ENCODE measurements at regions of chr17 and their contacts with region 1.

Region 1: DNA sequence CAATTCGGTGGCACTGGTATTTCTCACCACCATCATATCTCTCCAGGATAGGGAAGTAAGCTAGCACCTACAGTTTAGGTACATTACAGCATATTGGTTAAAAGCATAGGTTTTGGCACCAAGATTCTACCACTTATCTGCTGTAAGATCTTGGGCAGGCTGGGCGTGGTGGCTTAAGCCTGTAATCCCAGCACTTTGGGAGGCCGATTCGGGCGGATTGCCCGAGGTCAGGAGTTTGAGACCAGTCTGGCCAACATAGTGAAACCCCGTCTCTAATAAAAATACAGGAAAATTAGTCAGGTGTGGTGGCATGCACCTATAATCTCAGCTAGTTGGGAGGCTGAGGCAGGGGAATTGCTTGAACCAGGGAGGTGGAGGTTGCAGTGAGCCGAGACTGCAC is 51.4 kb downstream of the GPATCH8 start:
- DNase-seq: no peak
- ATAC-seq: no peak
- H3K4me3 ChIP-seq: no peak overlapping the region
- H3K4me3 Mint-ChIP-seq: no peak overlapping the region
- H3K27ac ChIP-seq: no peak overlapping the region
- H3K27ac Mint-ChIP-seq: no peak overlapping the region
- H3K4me1 ChIP-seq: peaks cover 2% of the 10 kb centered on the region
- H3K4me1 Mint-ChIP-seq: peaks cover 33% of the 10 kb centered on the region
- H3K27me3 ChIP-seq: no peaks in the 10 kb centered on the region
- H3K27me3 Mint-ChIP-seq: no peaks in the 10 kb centered on the region
- CTCF ChIP-seq: no peak

Region 2: GRCh38 chr17:44409314-44410028 is 42.4 kb before region 1 on chr17:
- CTCF ChIA-PET with region 1: no interaction called
- POLR2A ChIA-PET with region 1: no interaction called
- intact Hi-C with region 1: loop called in 1 of 2 experiments (anchors 5 kb)
- DNase-seq: no peak
- ATAC-seq: no peak
- H3K4me3 ChIP-seq: no peak overlapping the region
- H3K4me3 Mint-ChIP-seq: no peak overlapping the region
- H3K27ac ChIP-seq: no peak overlapping the region
- H3K27ac Mint-ChIP-seq: no peak overlapping the region
- H3K4me1 ChIP-seq: no peaks in the 10 kb centered on the region
- H3K4me1 Mint-ChIP-seq: no peaks in the 10 kb centered on the region
- H3K27me3 ChIP-seq: no peaks in the 10 kb centered on the region
- H3K27me3 Mint-ChIP-seq: no peaks in the 10 kb centered on the region
- CTCF ChIP-seq: no peak

Region 3: GRCh38 chr17:45902892-45903346 is 1451.1 kb after region 1 on chr17:
- CTCF ChIA-PET with region 1: no interaction called
- POLR2A ChIA-PET with region 1: no interaction called
- intact Hi-C with region 1: no loop called
- DNase-seq: no peak
- ATAC-seq: no peak
- H3K4me3 ChIP-seq: no peak overlapping the region
- H3K4me3 Mint-ChIP-seq: no peak overlapping the region
- H3K27ac ChIP-seq: no peak overlapping the region
- H3K27ac Mint-ChIP-seq: no peak overlapping the region
- H3K4me1 ChIP-seq: peaks cover 8% of the 10 kb centered on the region
- H3K4me1 Mint-ChIP-seq: peaks cover 20% of the 10 kb centered on the region
- H3K27me3 ChIP-seq: peaks cover 35 to 52% of the 10 kb centered on the region in 2 experiments
- H3K27me3 Mint-ChIP-seq: peaks cover 77% of the 10 kb centered on the region
- CTCF ChIP-seq: no peak